Caco-2 (cell line): ENCODE measurements at regions of chr4 and their contacts with region 1.

Region 1: GRCh38 chr4:76179398-76180318 is 31.5 kb upstream of the NUP54 start:
- DNase-seq: peak; percentile 80 to 86
- H3K4me3 ChIP-seq: no peak overlapping the region
- H3K4me3 Mint-ChIP-seq: no peak overlapping the region
- H3K27ac Mint-ChIP-seq: no peak overlapping the region
- H3K4me1 ChIP-seq: no peaks in the 10 kb centered on the region
- H3K4me1 Mint-ChIP-seq: no peaks in the 10 kb centered on the region
- H3K27me3 ChIP-seq: no peaks in the 10 kb centered on the region
- H3K27me3 Mint-ChIP-seq: no peaks in the 10 kb centered on the region
- CTCF ChIP-seq: peak; percentile 82 to 86

Region 2: DNA sequence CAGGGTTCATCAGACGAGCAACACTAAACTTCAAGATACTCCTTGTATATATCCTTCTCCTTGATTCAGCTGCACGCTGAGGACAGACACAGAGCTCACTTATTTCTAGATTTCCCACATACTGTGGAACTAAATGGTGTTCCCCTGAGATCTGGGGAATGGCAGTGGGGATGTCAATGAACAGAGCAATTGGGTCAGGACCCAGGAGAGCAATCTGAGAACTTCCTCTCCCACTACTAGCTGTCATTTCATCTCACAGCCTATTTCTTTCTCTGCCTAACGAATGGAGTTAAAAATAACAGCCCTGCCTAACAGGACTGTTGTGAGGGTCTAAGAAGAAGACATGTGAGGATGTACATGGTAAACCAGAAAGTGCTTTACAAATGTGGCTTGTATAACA is 249.5 kb before region 1 on chr4:
- CTCF ChIA-PET with region 1: no interaction called
- POLR2A ChIA-PET with region 1: no interaction called
- intact Hi-C with region 1: no loop called
- DNase-seq: no peak
- H3K4me3 ChIP-seq: no peak overlapping the region
- H3K4me3 Mint-ChIP-seq: no peak overlapping the region
- H3K27ac Mint-ChIP-seq: no peak overlapping the region
- H3K4me1 ChIP-seq: peaks cover 3% of the 10 kb centered on the region; the same call in 1 of the 2 replicates
- H3K4me1 Mint-ChIP-seq: peaks cover 5% of the 10 kb centered on the region
- H3K27me3 ChIP-seq: no peaks in the 10 kb centered on the region
- H3K27me3 Mint-ChIP-seq: no peaks in the 10 kb centered on the region
- CTCF ChIP-seq: no peak

Region 3: GRCh38 chr4:76213415-76214176 is 33.9 kb after region 1 on chr4 and contains the start of gene SCARB2:
- CTCF ChIA-PET with region 1: interaction called, 3 read pairs
- POLR2A ChIA-PET with region 1: no interaction called
- intact Hi-C with region 1: loop called (anchors 1 kb)
- DNase-seq: peak; percentile 81 to 91
- H3K4me3 ChIP-seq: peak within 1 kb of the TSS; percentile 84
- H3K4me3 Mint-ChIP-seq: peak within 1 kb of the TSS; percentile 84
- H3K27ac Mint-ChIP-seq: peak within 1 kb of the TSS; percentile 83
- H3K4me1 ChIP-seq: peaks cover 52% of the 10 kb centered on the region
- H3K4me1 Mint-ChIP-seq: peaks cover 56% of the 10 kb centered on the region
- H3K27me3 ChIP-seq: no peaks in the 10 kb centered on the region
- H3K27me3 Mint-ChIP-seq: no peaks in the 10 kb centered on the region
- CTCF ChIP-seq: peak in 1 of 2 experiments; percentile 13
- total RNA-seq, gene SCARB2: 148 and 150 TPM in 2 replicates

Region 4: GRCh38 chr4:76246025-76246424 is 66.4 kb after region 1 on chr4:
- CTCF ChIA-PET with region 1: interaction called, 4 read pairs
- POLR2A ChIA-PET with region 1: no interaction called
- intact Hi-C with region 1: loop called (anchors 1 kb)
- DNase-seq: peak in 1 of 2 experiments; percentile 25
- H3K4me3 ChIP-seq: no peak overlapping the region
- H3K4me3 Mint-ChIP-seq: no peak overlapping the region
- H3K27ac Mint-ChIP-seq: no peak overlapping the region
- H3K4me1 ChIP-seq: peaks cover 8% of the 10 kb centered on the region
- H3K4me1 Mint-ChIP-seq: peaks cover 8% of the 10 kb centered on the region
- H3K27me3 ChIP-seq: no peaks in the 10 kb centered on the region
- H3K27me3 Mint-ChIP-seq: no peaks in the 10 kb centered on the region
- CTCF ChIP-seq: peak in 1 of 2 experiments; percentile 36

Region 5: GRCh38 chr4:76305971-76306881 is 126.6 kb after region 1 on chr4 and contains the start of gene STBD1:
- CTCF ChIA-PET with region 1: interaction called, 12 read pairs
- POLR2A ChIA-PET with region 1: no interaction called
- intact Hi-C with region 1: loop called (anchors 1 kb)
- DNase-seq: peak; percentile 85 to 88
- H3K4me3 ChIP-seq: peak within 1 kb of the TSS; percentile 51
- H3K4me3 Mint-ChIP-seq: peak within 1 kb of the TSS; percentile 90
- H3K27ac Mint-ChIP-seq: peak within 1 kb of the TSS; percentile 71
- H3K4me1 ChIP-seq: peaks cover 22% of the 10 kb centered on the region
- H3K4me1 Mint-ChIP-seq: peaks cover 26% of the 10 kb centered on the region
- H3K27me3 ChIP-seq: no peaks in the 10 kb centered on the region
- H3K27me3 Mint-ChIP-seq: no peaks in the 10 kb centered on the region
- CTCF ChIP-seq: no peak
- total RNA-seq, gene STBD1: 3.8 and 4.2 TPM in 2 replicates

Region 6: GRCh38 chr4:76377911-76378310 is 198.3 kb after region 1 on chr4:
- CTCF ChIA-PET with region 1: interaction called, 18 read pairs
- POLR2A ChIA-PET with region 1: no interaction called
- intact Hi-C with region 1: loop called (anchors 1 kb)
- DNase-seq: peak; percentile 60 to 70
- H3K4me3 ChIP-seq: no peak overlapping the region
- H3K4me3 Mint-ChIP-seq: no peak overlapping the region
- H3K27ac Mint-ChIP-seq: no peak overlapping the region
- H3K4me1 ChIP-seq: peaks cover 18% of the 10 kb centered on the region
- H3K4me1 Mint-ChIP-seq: peaks cover 10% of the 10 kb centered on the region
- H3K27me3 ChIP-seq: no peaks in the 10 kb centered on the region
- H3K27me3 Mint-ChIP-seq: no peaks in the 10 kb centered on the region
- CTCF ChIP-seq: peak; percentile 63 to 71

Region 7: GRCh38 chr4:76430519-76431388 is 251.1 kb after region 1 on chr4:
- CTCF ChIA-PET with region 1: interaction called, 3 read pairs
- POLR2A ChIA-PET with region 1: no interaction called
- intact Hi-C with region 1: loop called (anchors 1 kb)
- DNase-seq: peak in 1 of 2 experiments; percentile 44
- H3K4me3 ChIP-seq: peak overlapping the region; percentile 17; the same call in 1 of the 2 replicates
- H3K4me3 Mint-ChIP-seq: peak overlapping the region; percentile 9
- H3K27ac Mint-ChIP-seq: no peak overlapping the region
- H3K4me1 ChIP-seq: no peaks in the 10 kb centered on the region
- H3K4me1 Mint-ChIP-seq: no peaks in the 10 kb centered on the region
- H3K27me3 ChIP-seq: no peaks in the 10 kb centered on the region
- H3K27me3 Mint-ChIP-seq: peaks cover 3% of the 10 kb centered on the region
- CTCF ChIP-seq: peak; percentile 45 to 61